Body of pancreas (tissue), 4 donors: ENCODE measurements at regions of chr3 and their contacts with region 1.

Region 1: GRCh38 chr3:16247276-16248061 is 17.3 kb downstream of the DPH3 start:
- DNase-seq: peak; percentile 79 to 85 (median 82)
- ATAC-seq: peak; percentile 78
- H3K4me3 ChIP-seq: no peak overlapping the region
- H3K27ac ChIP-seq: no peak overlapping the region
- H3K4me1 ChIP-seq: peaks cover 35% of the 10 kb centered on the region
- H3K27me3 ChIP-seq: no peaks in the 10 kb centered on the region
- CTCF ChIP-seq: peak; percentile 87 to 96 (median 89)
- POLR2A ChIP-seq: no peak

Region 2: DNA sequence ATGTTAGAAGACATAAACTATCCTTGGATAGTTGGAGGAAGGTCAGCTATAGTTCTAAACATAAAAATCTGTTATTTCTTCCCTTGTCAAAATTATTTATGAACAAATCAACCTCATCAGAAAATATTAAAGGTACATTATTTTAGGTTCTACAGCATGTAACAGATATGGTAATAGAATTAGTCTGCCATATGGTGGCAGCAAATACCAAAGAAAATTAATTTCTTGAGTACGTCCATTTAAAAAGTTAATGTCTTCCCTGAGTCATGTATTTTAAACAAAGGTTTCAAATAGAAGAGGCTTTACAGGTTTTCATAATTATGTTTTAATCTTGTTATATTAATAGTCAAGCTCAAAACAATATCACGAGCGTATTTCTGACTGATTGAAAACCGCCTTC is 431.8 kb before region 1 on chr3:
- intact Hi-C with region 1: loop called (anchors 10 kb)
- DNase-seq: no peak
- ATAC-seq: peak; percentile 50
- H3K4me3 ChIP-seq: no peak overlapping the region
- H3K27ac ChIP-seq: no peak overlapping the region
- H3K4me1 ChIP-seq: peaks cover 37% of the 10 kb centered on the region
- H3K27me3 ChIP-seq: no peaks in the 10 kb centered on the region
- CTCF ChIP-seq: peak in 6 of 7 experiments; percentile 16 to 55 (median 50)
- POLR2A ChIP-seq: no peak

Region 3: DNA sequence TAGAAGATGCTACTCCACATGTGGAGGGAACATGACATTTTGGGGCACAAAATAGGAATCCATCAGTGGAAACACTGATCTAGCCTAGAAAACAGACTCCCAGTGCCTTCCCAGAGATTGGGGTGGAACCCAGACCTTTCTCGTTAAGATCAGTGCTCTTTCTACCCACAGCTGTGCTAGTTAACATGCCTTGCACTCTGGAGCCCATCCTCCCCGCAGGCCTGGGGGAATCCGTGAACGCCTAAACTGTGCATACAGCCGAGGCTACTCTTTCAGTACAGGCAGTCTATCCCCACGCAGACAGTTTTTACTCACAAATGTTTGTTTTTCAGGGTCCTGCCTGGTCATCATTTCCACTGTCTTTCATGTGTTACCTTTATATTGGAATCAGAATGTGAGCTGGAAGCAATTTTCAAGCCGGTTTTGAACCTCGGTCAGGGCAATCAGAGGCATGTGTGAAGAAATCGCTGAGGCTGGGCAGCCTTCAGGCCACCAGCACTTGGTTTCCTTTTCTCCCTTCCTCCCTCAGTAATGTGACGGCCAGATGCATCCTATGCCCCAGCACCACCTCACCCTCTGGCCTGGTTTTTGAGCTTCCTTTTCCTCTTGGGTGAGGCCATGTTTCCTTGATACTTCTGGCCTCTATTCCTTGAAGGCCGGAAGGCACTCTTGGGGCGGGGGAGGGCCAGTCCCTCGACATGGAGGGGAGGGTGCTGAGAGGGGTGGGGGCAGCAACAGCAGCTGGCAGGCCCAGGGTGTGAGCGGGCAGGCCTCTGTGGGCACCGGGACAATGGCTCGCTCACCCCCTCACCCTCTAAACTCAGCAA is 196.6 kb before region 1 on chr3:
- intact Hi-C with region 1: loop called (anchors 5 kb)
- DNase-seq: no peak
- ATAC-seq: peak; percentile 33
- H3K4me3 ChIP-seq: no peak overlapping the region
- H3K27ac ChIP-seq: peak overlapping the region in 1 of 4 donors; percentile 41
- H3K4me1 ChIP-seq: peaks cover 5% of the 10 kb centered on the region
- H3K27me3 ChIP-seq: no peaks in the 10 kb centered on the region
- CTCF ChIP-seq: no peak
- POLR2A ChIP-seq: no peak